Activated CD4-positive, alpha-beta memory T cell treated with anti-CD3 and anti-CD28 coated beads for 36 hours (primary cell): ENCODE measurements at regions of chr2 and their contacts with region 1.

Region 1: GRCh38 chr2:61888267-61889055 is at the start of gene CCT4:
- DNase-seq: peak; percentile 92
- H3K4me3 Mint-ChIP-seq: peak within 1 kb of the TSS; percentile 99
- H3K27ac Mint-ChIP-seq: peak within 1 kb of the TSS; percentile 99
- H3K4me1 Mint-ChIP-seq: peaks cover 26% of the 10 kb centered on the region
- H3K27me3 Mint-ChIP-seq: no peaks in the 10 kb centered on the region
- total RNA-seq, gene CCT4: 345 to 352 TPM

Region 2: DNA sequence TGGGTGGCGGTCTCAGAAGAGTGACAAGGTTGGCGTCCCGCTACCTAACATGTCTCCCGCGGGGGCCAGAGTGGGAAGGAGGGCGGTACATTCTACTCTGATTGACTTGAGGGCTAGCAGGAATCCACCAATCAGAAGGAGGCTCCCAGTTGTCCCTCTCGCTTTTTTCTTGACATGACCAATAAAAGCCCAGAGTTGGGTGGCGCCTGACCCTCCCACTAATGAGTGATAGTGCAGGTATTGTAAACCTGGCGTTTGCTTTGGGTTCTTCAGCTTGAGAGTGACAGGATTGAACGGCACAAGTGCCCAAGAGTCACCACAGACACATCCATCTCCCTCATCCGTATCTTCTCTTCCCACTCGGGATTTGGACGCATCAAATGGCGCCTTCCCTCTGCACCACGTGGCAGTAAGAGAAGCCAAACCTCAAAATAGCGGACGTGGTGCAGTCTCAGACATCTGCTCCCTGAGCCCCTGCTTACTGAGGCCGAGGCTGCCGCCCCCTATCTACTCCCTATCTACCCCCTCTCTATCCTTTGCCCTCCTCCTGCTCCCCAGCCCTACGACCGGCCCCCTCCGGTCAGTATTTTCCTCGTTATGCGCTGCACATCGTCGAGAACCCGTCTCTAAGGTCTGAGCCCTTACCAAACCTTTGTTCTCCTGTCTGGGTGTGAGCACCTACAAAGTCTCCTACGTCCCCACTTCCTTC is 33.8 kb before region 1 on chr2:
- CTCF ChIA-PET with region 1: no interaction called
- POLR2A ChIA-PET with region 1: no interaction called
- intact Hi-C with region 1: loop called (anchors 1 kb)
- DNase-seq: peak; percentile 93
- H3K4me3 Mint-ChIP-seq: peak overlapping the region; percentile 91
- H3K27ac Mint-ChIP-seq: peak overlapping the region; percentile 90
- H3K4me1 Mint-ChIP-seq: peaks cover 19% of the 10 kb centered on the region
- H3K27me3 Mint-ChIP-seq: no peaks in the 10 kb centered on the region

Region 3: DNA sequence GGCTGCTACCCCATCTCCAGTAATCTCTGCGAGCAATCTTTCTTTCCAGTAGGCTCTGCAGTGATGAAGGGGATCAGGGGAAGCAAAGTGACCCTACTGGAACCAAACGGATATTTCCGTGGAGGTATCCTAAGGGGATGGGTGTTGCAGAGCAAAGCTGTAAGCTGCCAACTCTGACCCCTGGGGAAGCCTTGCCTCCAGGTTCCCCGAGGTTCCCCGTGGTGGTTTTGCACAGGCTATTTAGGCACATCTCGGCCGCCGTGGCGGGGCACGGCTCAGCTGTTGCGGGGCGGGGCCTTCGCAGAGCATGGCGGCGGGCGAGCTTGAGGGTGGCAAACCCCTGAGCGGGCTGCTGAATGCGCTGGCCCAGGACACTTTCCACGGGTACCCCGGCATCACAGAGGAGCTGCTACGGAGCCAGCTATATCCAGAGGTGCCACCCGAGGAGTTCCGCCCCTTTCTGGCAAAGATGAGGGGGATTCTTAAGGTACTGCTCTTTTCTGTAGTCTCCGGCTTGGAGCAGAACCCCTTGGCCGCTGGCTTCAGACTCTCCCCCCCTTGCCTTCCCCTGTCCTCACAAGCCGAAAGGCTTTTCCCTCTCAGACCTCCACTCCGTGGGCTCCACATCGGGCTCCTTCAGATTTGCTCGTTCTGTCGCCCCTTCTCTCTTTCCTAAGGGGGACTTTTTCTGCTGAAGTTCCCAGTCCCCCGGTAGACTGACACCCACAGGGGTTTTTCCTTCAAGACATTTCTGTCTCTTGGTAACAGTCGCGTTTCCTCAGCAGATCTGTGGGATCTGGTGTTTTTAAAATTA is 17.1 kb after region 1 on chr2 and contains the start of gene COMMD1:
- CTCF ChIA-PET with region 1: interaction called, 4 read pairs
- POLR2A ChIA-PET with region 1: no interaction called
- intact Hi-C with region 1: loop called (anchors 1 kb)
- DNase-seq: peak; percentile 91
- H3K4me3 Mint-ChIP-seq: peak within 1 kb of the TSS; percentile 93
- H3K27ac Mint-ChIP-seq: peak within 1 kb of the TSS; percentile 56
- H3K4me1 Mint-ChIP-seq: peaks cover 19% of the 10 kb centered on the region
- H3K27me3 Mint-ChIP-seq: no peaks in the 10 kb centered on the region
- total RNA-seq, gene COMMD1: 33.0 to 33.8 TPM